Heart left ventricle (tissue), 16 donors: ENCODE measurements at regions of chr7 and their contacts with region 1.

Region 1: GRCh38 chr7:117505245-117505644 is 25.4 kb downstream of the CFTR start:
- DNase-seq: no peak
- ATAC-seq: no peak
- H3K4me3 ChIP-seq: no peak overlapping the region
- H3K27ac ChIP-seq: no peak overlapping the region
- H3K4me1 ChIP-seq: no peaks in the 10 kb centered on the region
- H3K27me3 ChIP-seq: no peaks in the 10 kb centered on the region
- CTCF ChIP-seq: no peak
- POLR2A ChIP-seq: no peak

Region 2: GRCh38 chr7:118195837-118196474 is 690.7 kb after region 1 on chr7:
- intact Hi-C with region 1: no loop called
- DNase-seq: peak in 2 of 5 donors; percentile 28 to 34
- ATAC-seq: peak in 2 of 4 donors; percentile 66 to 70
- H3K4me3 ChIP-seq: no peak overlapping the region
- H3K27ac ChIP-seq: no peak overlapping the region
- H3K4me1 ChIP-seq: no peaks in the 10 kb centered on the region
- H3K27me3 ChIP-seq: no peaks in the 10 kb centered on the region
- CTCF ChIP-seq: peak; percentile 55 to 78 (median 64)
- POLR2A ChIP-seq: no peak

Region 3: DNA sequence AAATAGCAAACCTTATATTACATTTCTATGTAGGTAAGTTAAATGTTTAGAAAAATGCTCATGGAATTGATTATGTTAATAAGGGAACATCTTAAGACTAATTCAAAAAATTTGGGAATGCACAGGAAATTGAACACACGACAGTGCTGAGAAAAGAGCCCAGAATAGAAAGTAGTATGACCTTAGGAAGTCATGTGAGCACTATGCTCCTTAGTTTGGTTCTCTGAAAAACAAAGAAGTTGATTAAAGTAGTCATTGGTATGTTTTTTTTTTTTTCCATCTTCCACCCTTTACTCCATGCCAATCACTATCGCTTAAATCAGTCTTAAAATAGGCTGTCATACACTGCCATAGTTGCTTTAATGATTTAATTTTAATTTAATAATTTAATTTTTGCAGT is 962.1 kb after region 1 on chr7:
- intact Hi-C with region 1: loop called in 1 of 10 experiments (anchors 10 kb)
- DNase-seq: no peak
- ATAC-seq: no peak
- H3K4me3 ChIP-seq: no peak overlapping the region
- H3K27ac ChIP-seq: no peak overlapping the region
- H3K4me1 ChIP-seq: no peaks in the 10 kb centered on the region
- H3K27me3 ChIP-seq: no peaks in the 10 kb centered on the region
- CTCF ChIP-seq: no peak
- POLR2A ChIP-seq: no peak